Mammary epithelial cell (primary cell): ENCODE measurements at regions of chr3 and their contacts with region 1.

Region 1: DNA sequence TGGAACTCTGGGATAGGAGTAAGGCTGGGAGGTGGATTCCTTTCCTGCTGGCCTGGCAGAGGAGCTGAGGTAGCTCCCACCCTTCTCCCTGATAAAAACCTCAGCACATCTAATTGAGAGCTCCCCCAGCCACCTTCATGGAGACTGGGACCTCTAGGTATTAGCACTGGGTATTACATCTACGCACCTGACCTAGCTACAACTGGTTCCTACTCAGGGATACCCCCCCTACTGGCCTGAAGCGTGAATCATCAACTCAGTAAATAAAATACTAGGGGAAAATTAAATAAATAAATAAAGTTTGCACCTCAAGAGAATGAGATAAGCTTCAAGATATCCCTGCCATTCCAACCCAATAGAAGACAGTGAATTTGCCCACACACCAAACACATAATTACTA is 140.4 kb downstream of the NEK10 start:
- DNase-seq: no peak
- H3K4me3 ChIP-seq: no peak overlapping the region
- H3K27ac ChIP-seq: no peak overlapping the region
- H3K4me1 ChIP-seq: peaks cover 7% of the 10 kb centered on the region
- H3K27me3 ChIP-seq: no peaks in the 10 kb centered on the region
- CTCF ChIP-seq: no peak

Region 2: DNA sequence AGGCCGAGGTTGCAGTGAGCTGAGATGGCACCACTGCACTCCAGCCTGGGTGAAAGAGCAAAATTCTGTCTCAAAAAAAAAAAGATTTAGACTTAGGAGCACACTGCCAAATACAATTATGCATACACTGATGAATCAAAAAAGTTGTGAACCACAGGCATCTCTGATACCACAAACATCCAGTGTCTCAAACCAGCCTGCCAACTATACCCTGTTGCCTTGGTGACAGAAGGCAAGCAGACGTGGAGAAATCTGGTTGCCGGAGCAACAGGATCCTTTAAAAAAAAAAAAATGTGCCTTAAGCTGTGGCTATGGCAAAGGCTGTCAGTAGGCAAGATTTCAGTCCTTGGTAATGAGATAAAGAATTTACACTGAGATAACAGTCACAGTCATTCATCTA is 61.9 kb before region 1 on chr3:
- CTCF ChIA-PET with region 1: no interaction called
- dilution Hi-C with region 1: no loop called
- in situ Hi-C with region 1: no loop called
- intact Hi-C with region 1: loop called (anchors 10 kb)
- DNase-seq: peak; percentile 58
- H3K4me3 ChIP-seq: no peak overlapping the region
- H3K27ac ChIP-seq: no peak overlapping the region
- H3K4me1 ChIP-seq: no peaks in the 10 kb centered on the region
- H3K27me3 ChIP-seq: no peaks in the 10 kb centered on the region
- CTCF ChIP-seq: no peak

Region 3: GRCh38 chr3:27184261-27184660 is 44.5 kb before region 1 on chr3:
- CTCF ChIA-PET with region 1: no interaction called
- dilution Hi-C with region 1: no loop called
- in situ Hi-C with region 1: no loop called
- intact Hi-C with region 1: no loop called
- DNase-seq: no peak
- H3K4me3 ChIP-seq: no peak overlapping the region
- H3K27ac ChIP-seq: no peak overlapping the region
- H3K4me1 ChIP-seq: no peaks in the 10 kb centered on the region
- H3K27me3 ChIP-seq: no peaks in the 10 kb centered on the region
- CTCF ChIP-seq: no peak

Region 4: DNA sequence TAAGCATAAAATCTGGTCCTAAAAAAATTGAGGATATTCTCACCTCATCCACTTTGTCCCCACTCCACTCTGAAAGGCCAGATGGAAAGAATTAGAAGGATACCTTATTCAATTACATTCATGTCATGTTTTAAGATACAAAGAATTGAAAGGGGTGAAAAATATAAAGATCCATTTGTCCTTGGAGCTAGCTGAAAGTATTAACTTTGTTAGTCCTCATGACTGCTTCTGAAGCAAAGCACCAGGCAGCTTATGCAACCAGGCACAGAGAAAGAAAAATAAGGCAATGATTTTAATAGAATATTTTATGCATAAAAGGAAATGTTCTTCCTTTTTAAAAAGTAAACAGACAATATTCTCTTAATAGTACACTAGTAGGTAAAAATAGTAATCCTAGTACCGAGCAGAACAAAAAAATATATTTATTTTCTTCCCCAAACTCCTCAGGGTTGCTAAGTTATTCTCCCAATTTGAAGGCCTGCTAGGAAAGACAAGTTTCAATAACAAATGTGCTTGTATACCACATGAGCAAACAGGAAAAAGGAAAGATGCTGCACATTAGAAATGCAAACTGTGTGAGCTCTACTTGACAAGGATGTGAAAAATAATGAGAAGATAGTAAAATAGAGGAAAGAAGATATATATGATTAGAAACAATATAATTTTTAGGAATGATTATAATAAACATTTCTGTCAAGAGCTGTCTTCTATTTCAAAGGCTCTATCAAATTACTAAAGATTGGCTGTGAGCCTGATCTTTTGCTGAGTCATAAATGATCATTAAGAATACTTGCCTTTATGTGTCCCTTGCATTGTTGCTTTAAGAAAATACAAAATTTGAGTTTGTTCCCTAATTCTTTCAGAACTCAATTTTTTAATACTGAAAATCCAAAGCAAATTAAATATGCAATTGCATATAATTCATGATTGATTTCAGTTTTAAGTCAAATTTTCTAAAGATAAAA is 34.0 kb before region 1 on chr3:
- CTCF ChIA-PET with region 1: no interaction called
- dilution Hi-C with region 1: loop called (anchors 5 kb)
- in situ Hi-C with region 1: no loop called
- intact Hi-C with region 1: no loop called
- DNase-seq: no peak
- H3K4me3 ChIP-seq: no peak overlapping the region
- H3K27ac ChIP-seq: no peak overlapping the region
- H3K4me1 ChIP-seq: no peaks in the 10 kb centered on the region
- H3K27me3 ChIP-seq: no peaks in the 10 kb centered on the region
- CTCF ChIP-seq: no peak

Region 5: GRCh38 chr3:27289769-27290413 is 61.1 kb after region 1 on chr3:
- CTCF ChIA-PET with region 1: no interaction called
- dilution Hi-C with region 1: loop called (anchors 5 kb)
- in situ Hi-C with region 1: no loop called
- intact Hi-C with region 1: no loop called
- DNase-seq: no peak
- H3K4me3 ChIP-seq: no peak overlapping the region
- H3K27ac ChIP-seq: no peak overlapping the region
- H3K4me1 ChIP-seq: no peaks in the 10 kb centered on the region
- H3K27me3 ChIP-seq: no peaks in the 10 kb centered on the region
- CTCF ChIP-seq: no peak